AG04449 (cell line): ENCODE measurements at regions of chr14 and their contacts with region 1.

Region 1: GRCh38 chr14:50773632-50774541 is 57.1 kb downstream of the NIN start:
- DNase-seq: no peak
- H3K4me3 ChIP-seq: no peak overlapping the region
- CTCF ChIP-seq: peak; percentile 84

Region 2: DNA sequence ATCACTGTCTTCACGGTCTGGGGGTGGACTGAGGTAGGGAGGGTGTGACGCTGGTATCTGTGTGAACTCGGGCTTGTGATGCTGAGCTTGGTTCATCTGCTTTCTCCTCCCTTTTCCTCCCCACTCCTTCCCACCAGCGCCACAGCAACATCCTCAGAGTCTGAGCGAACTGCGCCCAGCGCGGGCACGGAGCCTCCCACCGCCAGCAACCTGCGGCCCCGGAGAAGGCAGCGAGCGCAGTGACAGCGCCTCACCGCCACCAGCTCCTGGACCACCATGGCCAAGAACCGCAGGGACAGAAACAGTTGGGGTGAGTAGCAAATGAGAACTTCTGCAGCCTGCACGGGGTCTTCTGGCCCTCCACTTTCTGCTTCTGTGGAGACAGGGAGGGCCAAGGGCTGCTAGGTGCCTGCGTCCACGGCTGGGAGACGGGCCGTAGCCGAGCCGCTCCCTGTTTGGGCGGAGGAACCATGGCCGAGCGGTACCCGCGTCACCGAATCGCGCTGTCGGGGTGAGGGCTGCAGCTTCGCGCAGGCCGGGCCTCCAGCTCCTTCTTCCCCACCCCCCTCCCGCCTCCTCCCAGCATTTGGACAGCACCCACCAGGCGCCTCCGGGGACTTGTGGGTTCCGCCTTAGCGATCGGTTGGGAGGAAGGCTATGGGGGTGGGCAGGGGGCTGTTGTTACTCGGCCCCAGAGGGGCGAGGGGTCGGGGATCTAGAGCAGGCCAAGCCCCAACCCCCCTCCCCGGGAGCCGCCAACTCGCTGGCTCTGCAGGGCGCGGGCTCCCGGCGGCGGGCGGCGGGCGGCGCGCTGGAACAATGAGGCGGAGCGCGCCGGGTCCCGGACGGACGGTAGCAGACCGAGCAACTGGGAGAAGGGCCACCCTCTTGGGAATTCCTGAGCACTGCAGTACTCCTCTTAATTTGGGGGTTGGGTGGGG is 213.6 kb before region 1 on chr14 and contains the start of gene ATL1:
- CTCF ChIA-PET with region 1: interaction called, 29 read pairs
- POLR2A ChIA-PET with region 1: no interaction called
- DNase-seq: peak; percentile 1
- H3K4me3 ChIP-seq: peak within 1 kb of the TSS; percentile 67
- CTCF ChIP-seq: no peak

Region 3: GRCh38 chr14:50619556-50620141 is 154.2 kb before region 1 on chr14:
- CTCF ChIA-PET with region 1: interaction called, 98 read pairs
- POLR2A ChIA-PET with region 1: no interaction called
- DNase-seq: no peak
- H3K4me3 ChIP-seq: no peak overlapping the region
- CTCF ChIP-seq: peak; percentile 58

Region 4: GRCh38 chr14:50667996-50668825 is 105.7 kb before region 1 on chr14 and contains the start of gene SAV1:
- CTCF ChIA-PET with region 1: interaction called, 5 read pairs
- POLR2A ChIA-PET with region 1: interaction called, 10 read pairs
- DNase-seq: peak; percentile 66
- H3K4me3 ChIP-seq: peak within 1 kb of the TSS; percentile 78
- CTCF ChIP-seq: no peak

Region 5: DNA sequence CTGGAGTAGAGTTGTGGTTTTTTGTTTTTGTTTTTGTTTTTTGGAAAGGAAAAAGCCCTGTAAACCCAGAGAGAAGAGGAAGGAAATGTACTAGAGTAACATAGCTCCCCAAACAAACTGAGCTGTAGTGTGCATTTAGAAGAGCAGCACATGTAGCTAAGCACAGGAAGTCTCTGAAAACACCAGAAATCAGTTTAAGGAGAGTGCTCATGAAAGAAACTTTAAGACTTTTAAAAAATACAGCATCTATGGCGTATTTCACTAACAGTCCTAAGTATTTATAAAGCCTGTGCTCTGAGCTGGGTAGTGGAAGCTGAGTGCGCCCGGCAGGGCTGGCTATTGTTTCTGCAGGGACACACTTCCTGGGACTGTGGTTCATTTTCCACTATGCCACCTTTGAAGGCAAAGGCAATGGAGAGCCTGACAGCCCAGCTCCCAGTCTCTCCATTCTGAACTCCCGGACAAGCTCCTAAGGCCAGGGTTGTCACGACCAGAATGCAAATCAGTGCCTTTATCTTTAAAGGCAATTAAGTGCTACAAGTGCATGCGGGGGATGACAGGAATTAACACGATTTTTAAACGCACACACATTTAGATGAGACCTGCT is 11.7 kb after region 1 on chr14:
- CTCF ChIA-PET with region 1: interaction called, 189 read pairs
- POLR2A ChIA-PET with region 1: no interaction called
- DNase-seq: no peak
- H3K4me3 ChIP-seq: no peak overlapping the region
- CTCF ChIP-seq: no peak

Region 6: GRCh38 chr14:50860478-50861086 is 86.7 kb after region 1 on chr14:
- CTCF ChIA-PET with region 1: interaction called, 127 read pairs
- POLR2A ChIA-PET with region 1: interaction called, 3 read pairs
- DNase-seq: no peak
- H3K4me3 ChIP-seq: peak overlapping the region; percentile 57
- CTCF ChIP-seq: peak; percentile 65

Region 7: DNA sequence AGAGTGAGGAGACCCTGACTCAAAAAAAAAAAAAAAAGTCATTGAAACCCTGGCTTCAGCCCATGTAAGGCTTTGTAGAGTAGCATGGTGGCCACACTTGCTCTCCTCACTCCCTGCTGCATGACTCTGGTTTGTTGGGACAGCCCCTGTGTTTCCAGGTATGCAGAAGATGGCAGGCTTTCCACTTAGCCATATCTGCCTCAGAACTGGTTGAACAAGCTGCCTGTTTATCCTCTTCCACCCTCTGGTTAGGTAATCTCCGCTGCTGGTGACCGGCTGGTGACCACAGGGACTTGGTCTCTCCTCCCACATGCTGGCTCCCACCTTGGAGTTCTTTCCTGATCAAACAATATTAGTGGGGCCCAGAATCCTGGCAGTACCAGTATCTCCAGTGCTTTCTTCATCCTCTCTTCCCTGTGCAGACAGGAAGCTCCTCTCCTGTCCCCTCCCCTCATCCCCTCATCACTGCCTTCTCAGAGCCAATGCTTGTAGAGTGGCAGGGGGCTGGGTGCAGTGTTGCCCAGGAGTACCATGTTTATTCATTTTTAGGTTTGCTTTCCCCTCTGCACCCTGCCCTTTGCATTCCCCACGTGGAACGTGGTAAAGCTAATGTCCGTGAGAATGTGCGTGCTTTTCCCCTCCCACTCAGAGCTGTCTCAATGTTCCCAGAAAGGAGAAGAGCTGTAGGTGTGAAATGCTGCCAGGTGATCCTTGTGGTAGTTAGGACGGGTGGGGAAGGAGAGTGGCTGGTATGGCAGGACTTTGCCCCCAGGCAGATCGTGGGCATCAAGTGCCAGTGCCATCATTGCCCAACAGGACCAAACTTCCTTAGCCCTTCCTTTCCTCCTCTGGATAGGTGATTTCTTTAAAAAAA is 109.3 kb after region 1 on chr14:
- CTCF ChIA-PET with region 1: no interaction called
- POLR2A ChIA-PET with region 1: no interaction called
- DNase-seq: no peak
- H3K4me3 ChIP-seq: no peak overlapping the region
- CTCF ChIP-seq: no peak

Region 8: DNA sequence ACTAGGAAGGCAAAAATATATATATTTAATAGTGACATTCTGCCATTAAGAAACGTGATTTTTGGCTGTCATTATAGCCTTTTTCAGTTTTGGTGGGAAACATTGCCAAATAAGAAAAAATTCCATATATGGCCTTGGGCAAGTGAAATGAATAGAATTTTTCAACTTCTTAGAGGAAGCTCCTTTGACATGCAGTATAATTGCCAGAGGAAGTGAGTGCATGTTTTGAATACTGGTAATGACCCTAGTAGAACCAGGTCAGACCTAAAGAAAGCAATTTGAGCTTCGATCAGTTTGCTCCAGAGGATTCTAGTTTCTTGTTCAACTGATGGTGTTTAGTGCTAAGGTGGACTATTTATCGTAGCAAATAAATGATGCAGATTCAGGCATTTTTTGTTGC is 347.2 kb after region 1 on chr14:
- CTCF ChIA-PET with region 1: no interaction called
- POLR2A ChIA-PET with region 1: no interaction called
- DNase-seq: no peak
- H3K4me3 ChIP-seq: no peak overlapping the region
- CTCF ChIP-seq: no peak